ENCODE measurements at regions of chr2 and their contacts with region 1.

Region 1: GRCh38 chr2:152483276-152484063 is 148.5 kb downstream of the FMNL2 start:
- DNase-seq: no peak
- ATAC-seq: no peak
- H3K4me3 ChIP-seq: no peak overlapping the region
- H3K4me3 Mint-ChIP-seq: no peak overlapping the region
- H3K27ac ChIP-seq: no peak overlapping the region
- H3K27ac Mint-ChIP-seq: no peak overlapping the region
- H3K4me1 ChIP-seq: no peaks in the 10 kb centered on the region
- H3K4me1 Mint-ChIP-seq: no peaks in the 10 kb centered on the region
- H3K27me3 ChIP-seq: peaks cover 0 to 3% of the 10 kb centered on the region in 2 experiments
- H3K27me3 Mint-ChIP-seq: no peaks in the 10 kb centered on the region

Region 2: DNA sequence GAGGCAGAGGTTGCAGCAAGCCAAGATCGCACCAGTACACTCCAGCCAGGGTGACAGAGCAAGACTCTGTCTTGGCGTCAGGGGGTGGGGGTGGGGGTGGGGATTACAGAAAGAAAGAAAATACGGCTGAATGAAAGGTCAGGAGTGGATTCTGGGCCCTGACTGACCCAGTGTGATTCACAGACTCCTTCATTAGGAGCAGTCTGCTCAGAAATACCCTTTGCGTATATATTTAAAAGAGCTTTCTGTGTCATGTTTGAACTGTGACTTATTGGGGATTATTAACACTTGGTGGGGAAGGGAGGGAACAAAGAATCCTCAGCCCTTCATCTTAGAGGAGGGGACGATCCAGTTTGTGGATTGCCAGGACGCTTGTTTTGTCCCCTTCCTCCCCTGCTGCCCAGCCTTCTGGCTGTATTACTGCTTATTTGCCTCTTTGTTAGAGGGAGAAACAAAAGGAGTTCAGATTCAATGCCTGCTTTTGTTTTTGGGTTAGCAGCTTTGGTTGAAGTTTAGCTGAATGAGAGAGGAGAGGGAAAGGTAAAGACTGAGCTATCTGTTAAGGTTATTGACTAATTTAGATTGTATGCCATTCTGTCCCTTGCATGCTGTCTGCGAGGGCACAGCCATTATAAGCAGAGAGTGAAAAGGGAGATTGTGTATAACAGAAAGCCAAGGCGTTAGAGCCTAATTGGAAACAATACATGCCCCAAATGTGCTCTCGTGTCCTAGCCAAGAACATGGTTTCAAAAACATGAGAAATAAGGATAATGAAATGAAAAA is 30.1 kb before region 1 on chr2:
- CTCF ChIA-PET with region 1: no interaction called
- POLR2A ChIA-PET with region 1: no interaction called
- DNase-seq: no peak
- ATAC-seq: no peak
- H3K4me3 ChIP-seq: no peak overlapping the region
- H3K4me3 Mint-ChIP-seq: no peak overlapping the region
- H3K27ac ChIP-seq: no peak overlapping the region
- H3K27ac Mint-ChIP-seq: no peak overlapping the region
- H3K4me1 ChIP-seq: no peaks in the 10 kb centered on the region
- H3K4me1 Mint-ChIP-seq: no peaks in the 10 kb centered on the region
- H3K27me3 ChIP-seq: no peaks in the 10 kb centered on the region
- H3K27me3 Mint-ChIP-seq: peaks cover 6 to 13% of the 10 kb centered on the region in 2 donors

Region 3: GRCh38 chr2:152464851-152465470 is 18.5 kb before region 1 on chr2:
- CTCF ChIA-PET with region 1: interaction called in 1 of 2 experiments, 11 read pairs
- POLR2A ChIA-PET with region 1: no interaction called
- DNase-seq: no peak
- ATAC-seq: no peak
- H3K4me3 ChIP-seq: no peak overlapping the region
- H3K4me3 Mint-ChIP-seq: no peak overlapping the region
- H3K27ac ChIP-seq: no peak overlapping the region
- H3K27ac Mint-ChIP-seq: no peak overlapping the region
- H3K4me1 ChIP-seq: no peaks in the 10 kb centered on the region
- H3K4me1 Mint-ChIP-seq: peaks cover 4 to 8% (median 6%) of the 10 kb centered on the region in 3 donors
- H3K27me3 ChIP-seq: peaks cover 0 to 6% of the 10 kb centered on the region in 2 experiments
- H3K27me3 Mint-ChIP-seq: peaks cover 0 to 5% of the 10 kb centered on the region in 2 donors

Measured in T-cell (primary cell).